Transverse colon (tissue), 4 donors: ENCODE measurements at regions of chr16 and their contacts with region 1.

Region 1: DNA sequence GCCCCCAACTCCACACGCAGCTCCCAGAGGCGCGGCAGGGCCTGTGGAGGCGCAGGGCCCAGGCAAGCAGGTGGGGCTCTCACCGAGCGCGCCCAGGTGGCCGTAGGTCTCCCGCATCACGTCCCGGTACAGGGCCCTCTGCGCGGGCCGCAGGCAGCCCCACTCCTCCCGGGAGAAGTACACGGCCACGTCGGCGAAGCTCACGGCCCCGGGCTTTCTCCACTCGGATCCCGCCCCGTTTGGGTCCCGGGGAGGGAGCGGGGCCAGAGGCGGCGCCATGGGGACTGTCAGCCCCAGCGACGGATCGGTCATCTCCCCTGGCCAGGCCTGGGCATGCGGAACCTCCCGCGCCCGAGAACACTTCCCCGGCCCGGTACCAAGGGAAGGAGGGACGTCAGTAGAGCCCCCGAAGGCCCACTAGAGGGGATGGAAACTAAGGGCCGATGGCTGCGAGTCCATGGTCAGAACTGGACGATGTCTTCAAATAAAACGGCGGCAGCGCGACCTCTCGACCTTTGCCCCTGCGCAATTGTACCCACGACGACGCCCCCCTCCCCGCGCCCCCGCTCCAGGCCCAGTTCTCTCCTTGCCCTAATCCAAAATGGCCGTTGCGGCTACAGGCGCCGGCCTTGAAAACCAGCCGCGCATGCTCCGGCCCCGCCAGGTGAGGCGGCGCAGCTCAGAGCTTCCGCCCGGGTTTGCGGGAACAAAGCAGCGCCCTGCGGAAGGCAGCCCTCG is at the start of gene ZNF747:
- DNase-seq: peak; percentile 94
- H3K4me3 ChIP-seq: peak within 1 kb of the TSS; percentile 51 to 74 (median 60)
- H3K27ac ChIP-seq: peak within 1 kb of the TSS; percentile 93 to 96 (median 95)
- H3K4me1 ChIP-seq: peaks cover 9 to 35% (median 30%) of the 10 kb centered on the region in 4 donors
- H3K27me3 ChIP-seq: no peaks in the 10 kb centered on the region
- CTCF ChIP-seq: no peak
- EP300 ChIP-seq: no peak
- POLR2A ChIP-seq: peak; percentile 42
- total RNA-seq, gene ZNF747: 16.0 to 25.7 (median 16.8) TPM

Region 2: DNA sequence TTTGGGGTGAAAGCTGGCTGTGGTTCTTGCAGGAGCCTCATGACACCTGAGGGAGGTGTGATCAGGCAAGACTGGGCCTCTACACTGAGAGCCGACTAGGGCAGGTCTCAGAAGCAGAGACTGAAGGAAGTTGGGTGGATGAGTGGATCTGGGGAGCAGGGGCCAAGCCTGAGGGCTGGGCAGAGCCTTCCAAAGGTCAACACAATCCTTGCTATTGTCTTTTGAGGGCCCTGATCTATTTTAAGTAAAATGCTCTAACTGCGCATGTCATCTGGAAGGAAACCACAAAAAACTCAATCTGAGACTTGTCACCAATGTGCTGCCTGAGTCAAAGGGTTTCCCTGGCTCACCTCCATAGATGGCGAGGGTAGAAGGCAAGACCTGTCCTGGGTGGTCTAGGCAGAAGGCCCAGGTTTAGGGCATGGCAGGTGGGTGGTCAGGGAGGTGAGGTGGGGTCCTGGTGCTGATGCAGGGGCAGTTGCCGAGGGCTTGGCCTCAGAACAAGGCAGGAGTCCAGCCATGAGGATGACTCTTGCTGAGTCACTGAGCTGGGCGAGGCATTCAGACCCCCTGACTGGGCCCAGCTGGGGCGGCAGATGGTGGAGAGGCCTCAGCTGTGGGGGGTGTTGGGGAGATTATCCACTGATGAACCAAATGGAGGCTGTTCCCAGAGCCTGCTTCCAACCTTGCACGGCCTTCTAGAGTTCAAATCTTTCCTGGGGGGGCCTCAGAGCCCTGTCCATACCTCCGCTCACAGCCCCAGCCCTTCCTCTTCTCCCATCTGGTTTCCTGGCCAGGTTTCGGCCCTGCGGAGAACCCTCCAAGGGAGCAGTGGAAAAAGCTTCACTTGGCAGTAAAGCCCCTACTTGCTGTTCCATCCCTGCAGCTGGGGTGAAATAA is 709.1 kb before region 1 on chr16:
- in situ Hi-C with region 1: no loop called
- intact Hi-C with region 1: no loop called
- DNase-seq: peak; percentile 70
- H3K4me3 ChIP-seq: peak overlapping the region in 1 of 4 donors; percentile 7
- H3K27ac ChIP-seq: peak overlapping the region; percentile 93 to 97 (median 96)
- H3K4me1 ChIP-seq: peaks cover 54 to 93% (median 89%) of the 10 kb centered on the region in 4 donors
- H3K27me3 ChIP-seq: no peaks in the 10 kb centered on the region
- CTCF ChIP-seq: no peak
- EP300 ChIP-seq: no peak
- POLR2A ChIP-seq: no peak

Region 3: DNA sequence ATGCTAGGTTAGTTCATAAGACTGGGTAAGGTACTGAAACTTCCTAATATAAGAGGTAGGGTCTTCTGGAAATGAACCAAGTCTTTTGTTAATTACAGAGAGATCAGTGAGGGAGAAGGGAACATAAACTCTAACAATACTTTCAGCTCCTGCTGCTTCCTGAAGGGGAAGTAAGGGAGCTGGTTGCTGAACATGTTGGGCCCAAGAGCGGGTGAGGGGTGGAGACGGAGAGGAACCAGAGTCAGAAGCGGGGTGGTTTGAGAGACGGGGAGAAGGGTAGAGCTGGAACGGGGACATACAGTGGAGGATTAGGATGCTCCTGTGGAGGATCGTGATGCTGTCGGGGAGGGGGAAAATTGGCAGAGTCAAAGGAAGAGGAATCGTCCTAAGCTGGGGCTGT is 11.6 kb after region 1 on chr16:
- in situ Hi-C with region 1: no loop called
- intact Hi-C with region 1: no loop called
- DNase-seq: no peak
- H3K4me3 ChIP-seq: no peak overlapping the region
- H3K27ac ChIP-seq: no peak overlapping the region
- H3K4me1 ChIP-seq: peaks cover 0 to 39% (median 21%) of the 10 kb centered on the region in 4 donors
- H3K27me3 ChIP-seq: no peaks in the 10 kb centered on the region
- CTCF ChIP-seq: no peak
- EP300 ChIP-seq: no peak
- POLR2A ChIP-seq: no peak

Region 4: DNA sequence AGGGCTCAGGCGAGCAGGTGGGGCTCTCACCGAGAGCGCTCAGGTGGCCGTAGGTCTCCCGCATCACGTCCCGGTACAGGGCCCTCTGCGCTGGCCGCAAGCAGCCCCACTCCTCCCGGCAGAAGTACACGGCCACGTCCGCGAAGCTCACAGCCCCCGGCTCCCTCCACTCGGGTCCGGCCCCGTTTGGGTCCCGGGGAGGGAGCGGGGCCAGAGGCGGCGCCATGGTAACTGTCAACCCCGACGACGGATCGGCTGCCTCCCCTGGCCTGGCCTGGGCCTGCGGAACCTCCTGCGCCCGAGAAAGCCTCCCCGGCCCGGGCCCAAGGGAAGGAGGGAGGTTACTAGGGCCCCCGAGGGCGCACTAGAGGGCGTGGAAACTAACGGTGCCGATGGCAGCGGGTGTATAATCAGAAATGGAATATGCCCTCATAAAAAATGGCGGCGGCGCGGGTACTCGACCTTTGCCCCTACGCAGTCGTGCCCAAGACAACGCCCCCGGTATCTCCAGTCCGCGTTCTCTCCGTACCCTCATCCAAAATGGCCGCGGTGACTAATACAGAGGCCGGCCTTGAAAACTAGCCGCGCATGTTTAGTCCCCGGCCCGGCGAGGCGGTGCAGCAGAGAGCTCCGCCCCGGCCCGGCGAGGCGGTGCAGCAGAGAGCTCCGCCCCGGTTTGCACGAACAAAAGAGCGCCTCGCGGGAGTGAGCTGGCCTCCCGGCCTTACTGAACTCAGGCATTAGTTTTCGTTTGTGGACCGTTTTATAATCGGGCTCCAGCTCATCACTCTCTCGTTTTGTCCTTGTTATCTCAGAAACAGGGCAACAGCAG is 23.6 kb after region 1 on chr16 and contains the start of gene ZNF764:
- in situ Hi-C with region 1: no loop called
- intact Hi-C with region 1: loop called (anchors 1 kb)
- DNase-seq: peak; percentile 99
- H3K4me3 ChIP-seq: peak within 1 kb of the TSS; percentile 59 to 94 (median 73)
- H3K27ac ChIP-seq: peak within 1 kb of the TSS; percentile 91 to 99 (median 96)
- H3K4me1 ChIP-seq: peaks cover 24 to 53% (median 43%) of the 10 kb centered on the region in 4 donors
- H3K27me3 ChIP-seq: no peaks in the 10 kb centered on the region
- CTCF ChIP-seq: peak in 1 of 5 experiments; percentile 6
- EP300 ChIP-seq: no peak
- POLR2A ChIP-seq: peak; percentile 67
- total RNA-seq, gene ZNF764: 17.9 to 48.0 (median 23.2) TPM